ENCODE measurements at regions of chr1 and their contacts with region 1.

Region 1: DNA sequence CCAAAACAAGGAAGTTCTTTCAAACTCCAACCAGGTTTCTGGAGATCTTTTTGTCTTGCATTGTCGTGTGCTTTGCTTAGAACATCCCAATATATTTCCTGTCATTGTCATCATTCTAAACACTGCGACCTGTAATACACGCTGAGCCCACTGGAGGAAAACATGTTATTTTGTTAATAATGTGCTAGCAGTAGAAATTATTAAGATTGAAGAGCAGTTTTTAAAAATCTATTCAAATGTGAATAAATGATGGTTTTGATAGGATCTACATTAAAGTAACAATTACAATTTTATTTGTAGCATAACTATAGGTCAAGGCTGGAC is 268.5 kb downstream of the PTPRC start:
- DNase-seq: no peak
- H3K4me3 Mint-ChIP-seq: peak overlapping the region; percentile 27
- H3K27ac Mint-ChIP-seq: peak overlapping the region; percentile 86
- H3K4me1 Mint-ChIP-seq: peaks cover 68% of the 10 kb centered on the region
- H3K27me3 Mint-ChIP-seq: no peaks in the 10 kb centered on the region

Region 2: GRCh38 chr1:198837278-198838021 is 69.9 kb before region 1 on chr1:
- intact Hi-C with region 1: no loop called
- DNase-seq: no peak
- H3K4me3 Mint-ChIP-seq: no peak overlapping the region
- H3K27ac Mint-ChIP-seq: no peak overlapping the region
- H3K4me1 Mint-ChIP-seq: peaks cover 5% of the 10 kb centered on the region
- H3K27me3 Mint-ChIP-seq: no peaks in the 10 kb centered on the region

Region 3: GRCh38 chr1:198858033-198858432 is 49.4 kb before region 1 on chr1:
- intact Hi-C with region 1: no loop called
- DNase-seq: no peak
- H3K4me3 Mint-ChIP-seq: no peak overlapping the region
- H3K27ac Mint-ChIP-seq: no peak overlapping the region
- H3K4me1 Mint-ChIP-seq: peaks cover 20% of the 10 kb centered on the region
- H3K27me3 Mint-ChIP-seq: no peaks in the 10 kb centered on the region

Region 4: DNA sequence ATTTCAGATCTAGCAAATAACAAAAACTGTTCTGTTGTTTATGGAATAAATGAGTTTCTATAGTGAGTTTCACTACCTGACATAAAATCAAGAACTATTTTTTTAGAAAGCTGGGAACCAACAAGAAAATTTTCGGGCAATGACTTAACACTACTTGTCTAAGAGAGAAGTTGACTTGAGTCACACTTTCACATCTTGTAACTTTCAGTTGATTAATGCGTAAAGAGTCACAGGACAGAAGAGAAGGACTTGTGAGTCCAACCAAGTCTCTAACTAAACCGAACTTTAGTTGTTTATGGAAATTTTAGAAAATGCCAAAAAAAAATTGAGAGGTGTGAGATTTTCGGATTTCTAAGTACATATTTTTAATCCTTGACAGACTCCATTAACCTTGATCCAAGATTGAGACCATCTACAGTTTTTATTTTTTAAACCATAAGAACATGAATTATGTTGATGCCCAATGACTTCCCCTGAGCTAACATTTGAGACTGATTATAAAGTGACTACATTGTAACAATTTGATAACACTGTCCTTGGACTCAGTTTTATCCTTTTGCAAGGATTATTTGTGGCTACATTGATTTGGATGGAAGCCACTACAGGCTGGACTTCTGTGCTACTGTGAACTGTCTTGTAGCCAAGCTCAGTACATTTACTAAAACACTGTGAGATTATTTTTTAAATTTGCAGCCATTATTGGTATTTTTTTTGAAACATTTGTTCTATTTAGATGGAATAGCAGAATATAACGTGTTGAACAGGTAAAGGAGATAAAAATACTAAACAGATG is 15.4 kb after region 1 on chr1:
- intact Hi-C with region 1: loop called (anchors 1 kb)
- DNase-seq: no peak
- H3K4me3 Mint-ChIP-seq: peak overlapping the region; percentile 78
- H3K27ac Mint-ChIP-seq: peak overlapping the region; percentile 90
- H3K4me1 Mint-ChIP-seq: peaks cover 90% of the 10 kb centered on the region
- H3K27me3 Mint-ChIP-seq: no peaks in the 10 kb centered on the region

Region 5: GRCh38 chr1:198986036-198986435 is 78.7 kb after region 1 on chr1:
- intact Hi-C with region 1: no loop called
- DNase-seq: no peak
- H3K4me3 Mint-ChIP-seq: no peak overlapping the region
- H3K27ac Mint-ChIP-seq: no peak overlapping the region
- H3K4me1 Mint-ChIP-seq: peaks cover 10% of the 10 kb centered on the region
- H3K27me3 Mint-ChIP-seq: no peaks in the 10 kb centered on the region

Measured in activated T-helper 1 cell treated with anti-CD3 and anti-CD28 coated beads, Interleukin-12 subunit alpha, Interleukin-12 subunit beta, Interleukin-2, Interleukin-4 antibody, amounts not matched to agents 30 ng/mL and 10 ng/mL and 1 ng/mL, durations not matched to agents 14 hours and 24 hours and 36 hours (primary cell).